Sigmoid colon (tissue), 7 donors: ENCODE measurements at regions of chr1 and their contacts with region 1.

Region 1: DNA sequence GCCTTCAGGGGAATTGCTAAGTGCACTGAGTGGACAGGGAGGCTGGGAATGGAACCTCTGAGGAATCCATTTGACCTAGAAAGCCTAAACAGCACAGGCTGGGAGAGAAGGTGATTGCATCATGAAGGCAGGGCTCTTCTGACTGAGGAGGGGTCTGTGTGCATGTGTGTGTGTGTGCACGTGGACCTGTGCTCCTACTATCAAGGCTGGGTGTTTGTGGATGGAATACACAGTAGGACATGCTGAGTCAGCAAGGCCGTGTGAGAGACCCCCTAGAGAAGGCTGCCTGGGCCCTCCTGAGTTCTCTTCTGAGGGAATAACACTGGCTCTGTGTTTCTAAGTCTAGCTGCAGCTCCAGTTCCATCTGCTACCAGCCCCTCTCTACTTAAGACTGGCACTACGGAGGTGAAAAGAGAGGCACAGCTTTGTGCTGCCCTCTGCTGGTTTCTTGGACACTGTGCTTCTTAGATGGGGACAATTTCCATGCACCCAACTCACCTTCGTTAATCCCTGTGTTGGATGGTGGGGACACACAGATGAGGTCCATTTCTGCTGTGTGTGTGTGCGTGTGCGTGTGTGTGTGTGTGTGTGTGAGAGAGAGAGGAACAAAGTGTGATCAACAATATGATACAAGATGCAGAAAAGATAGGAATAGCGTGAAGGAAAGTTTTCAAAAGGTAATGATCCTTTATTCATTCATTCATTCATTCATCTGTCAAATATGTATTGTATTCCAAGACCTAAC is 6.2 kb upstream of the EFCAB14 start:
- DNase-seq: peak; percentile 82
- H3K4me3 ChIP-seq: no peak overlapping the region
- H3K27ac ChIP-seq: no peak overlapping the region
- H3K4me1 ChIP-seq: peaks cover 0 to 5% (median 4%) of the 10 kb centered on the region in 4 donors
- H3K27me3 ChIP-seq: peaks cover 0 to 8% (median 3%) of the 10 kb centered on the region in 3 donors
- CTCF ChIP-seq: peak; percentile 72 to 91 (median 82)
- EP300 ChIP-seq: no peak
- POLR2A ChIP-seq: no peak

Region 2: GRCh38 chr1:46406881-46407608 is 318.1 kb before region 1 on chr1:
- intact Hi-C with region 1: loop called (anchors 5 kb)
- DNase-seq: no peak
- H3K4me3 ChIP-seq: peak overlapping the region; percentile 3 to 35 (median 25)
- H3K27ac ChIP-seq: peak overlapping the region in 1 of 4 donors; percentile 7
- H3K4me1 ChIP-seq: peaks cover 0 to 20% (median 16%) of the 10 kb centered on the region in 4 donors
- H3K27me3 ChIP-seq: no peaks in the 10 kb centered on the region
- CTCF ChIP-seq: no peak
- EP300 ChIP-seq: no peak
- POLR2A ChIP-seq: no peak

Region 3: DNA sequence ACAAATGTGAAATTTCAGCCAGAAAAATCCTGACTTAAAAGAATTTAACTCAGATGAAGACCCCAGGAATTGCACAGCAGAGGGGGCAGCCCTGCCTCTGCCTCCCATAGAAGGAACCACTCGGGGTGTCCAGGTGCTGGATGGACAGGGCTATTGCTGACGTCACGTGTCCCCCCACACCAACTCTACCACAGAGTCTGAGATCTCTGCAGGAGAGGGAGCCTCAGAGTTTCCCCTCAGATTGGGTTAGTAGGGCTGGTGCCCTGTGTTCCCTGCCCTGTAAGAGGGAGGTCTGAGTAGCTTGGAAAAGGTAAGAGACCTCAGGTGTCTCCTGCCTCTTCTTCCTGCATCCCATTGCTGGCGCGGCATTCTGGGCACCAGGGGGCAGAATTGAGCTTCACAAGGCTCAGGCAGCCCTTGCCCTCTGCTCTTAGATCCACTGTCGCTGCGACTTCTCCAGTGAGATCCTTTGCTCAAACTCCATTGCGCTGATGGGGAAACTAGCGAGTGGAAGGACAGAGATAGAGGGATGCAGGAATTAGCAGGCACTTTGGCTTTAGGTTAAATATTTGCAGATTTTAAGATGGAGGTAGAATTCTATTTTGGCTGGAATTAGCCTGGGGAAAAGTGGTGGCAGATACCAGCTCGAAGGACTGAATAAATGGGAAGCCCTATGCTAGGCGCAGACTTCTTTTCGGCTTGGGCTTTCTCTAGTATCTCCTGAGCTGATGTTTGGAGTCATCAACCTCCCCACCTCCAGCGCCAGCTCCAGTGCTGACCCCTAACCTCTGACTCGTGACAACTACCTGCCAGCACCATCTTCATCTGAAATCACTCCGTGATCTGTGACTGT is 278.3 kb before region 1 on chr1:
- intact Hi-C with region 1: loop called (anchors 5 kb)
- DNase-seq: peak; percentile 87
- H3K4me3 ChIP-seq: no peak overlapping the region
- H3K27ac ChIP-seq: no peak overlapping the region
- H3K4me1 ChIP-seq: peaks cover 0 to 19% (median 17%) of the 10 kb centered on the region in 4 donors
- H3K27me3 ChIP-seq: peaks cover 23 to 49% (median 38%) of the 10 kb centered on the region in 3 donors
- CTCF ChIP-seq: peak; percentile 48 to 88 (median 65)
- EP300 ChIP-seq: no peak
- POLR2A ChIP-seq: no peak

Region 4: GRCh38 chr1:46527474-46528296 is 197.5 kb before region 1 on chr1:
- intact Hi-C with region 1: loop called (anchors 2 kb)
- DNase-seq: peak; percentile 87
- H3K4me3 ChIP-seq: no peak overlapping the region
- H3K27ac ChIP-seq: no peak overlapping the region
- H3K4me1 ChIP-seq: peaks cover 0 to 2% (median 0%) of the 10 kb centered on the region in 4 donors
- H3K27me3 ChIP-seq: peaks cover 0 to 38% (median 11%) of the 10 kb centered on the region in 3 donors
- CTCF ChIP-seq: peak; percentile 74 to 93 (median 85)
- EP300 ChIP-seq: no peak
- POLR2A ChIP-seq: no peak

Region 5: GRCh38 chr1:46603858-46604549 is 121.2 kb before region 1 on chr1 and contains the start of gene MKNK1:
- intact Hi-C with region 1: loop called (anchors 5 kb)
- DNase-seq: peak; percentile 99
- H3K4me3 ChIP-seq: peak within 1 kb of the TSS; percentile 69 to 88 (median 80)
- H3K27ac ChIP-seq: peak within 1 kb of the TSS; percentile 85 to 89 (median 86)
- H3K4me1 ChIP-seq: peaks cover 0 to 54% (median 47%) of the 10 kb centered on the region in 4 donors
- H3K27me3 ChIP-seq: no peaks in the 10 kb centered on the region
- CTCF ChIP-seq: no peak
- EP300 ChIP-seq: peak in 1 of 4 donors; percentile 57
- POLR2A ChIP-seq: peak; percentile 86 to 95
- total RNA-seq, gene MKNK1: 32.1 to 54.3 (median 35.7) TPM

Region 6: DNA sequence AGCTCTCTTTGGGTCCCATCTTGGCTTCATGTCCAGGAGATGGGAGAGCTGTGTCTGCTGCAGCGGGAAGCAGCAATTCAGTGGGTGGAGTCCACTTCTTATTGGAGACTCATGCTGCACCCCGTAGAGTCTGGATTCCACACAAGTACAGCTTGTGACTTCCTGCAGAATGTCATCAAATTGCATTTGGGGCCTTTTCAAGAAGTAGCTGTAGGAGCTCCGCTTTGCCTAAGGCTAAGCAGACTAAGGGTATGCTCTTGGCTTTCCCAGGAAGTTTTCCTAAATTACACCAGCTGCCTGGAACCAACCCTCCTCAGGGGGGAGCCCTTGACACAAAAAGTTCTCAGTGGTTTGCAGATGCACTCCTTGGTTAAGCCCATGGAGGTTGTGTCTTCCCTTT is 102.8 kb before region 1 on chr1:
- intact Hi-C with region 1: loop called (anchors 1 kb)
- DNase-seq: peak; percentile 68
- H3K4me3 ChIP-seq: no peak overlapping the region
- H3K27ac ChIP-seq: no peak overlapping the region
- H3K4me1 ChIP-seq: peaks cover 0 to 7% (median 3%) of the 10 kb centered on the region in 4 donors
- H3K27me3 ChIP-seq: no peaks in the 10 kb centered on the region
- CTCF ChIP-seq: peak; percentile 14 to 59 (median 41)
- EP300 ChIP-seq: no peak
- POLR2A ChIP-seq: no peak